Caco-2 (cell line): ENCODE measurements at regions of chr16 and their contacts with region 1.

Region 1: DNA sequence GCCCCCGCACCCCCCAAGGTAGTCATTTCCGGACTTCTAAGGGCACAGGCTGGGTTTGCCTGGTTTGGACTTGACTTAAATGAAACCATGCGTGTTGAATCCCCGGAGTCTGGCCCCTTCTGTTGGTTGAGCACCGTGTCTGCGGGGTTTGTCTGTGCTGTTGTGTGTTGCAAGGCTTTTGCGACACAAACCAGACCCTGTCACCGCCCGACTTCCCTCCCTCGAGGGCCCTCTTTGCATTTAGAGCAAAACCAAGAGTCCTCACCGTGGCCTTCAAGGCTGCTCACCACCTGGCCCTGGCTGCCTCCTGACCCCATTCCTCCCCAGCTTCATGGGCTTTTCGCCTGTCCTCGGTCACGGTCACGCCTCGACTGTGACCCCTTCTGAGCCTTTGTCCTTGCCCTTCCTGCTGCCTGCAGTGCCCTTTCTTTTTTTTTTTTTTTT is 7.4 kb downstream of the CRISPLD2 start:
- DNase-seq: no peak
- H3K4me3 ChIP-seq: no peak overlapping the region
- H3K4me3 Mint-ChIP-seq: no peak overlapping the region
- H3K27ac Mint-ChIP-seq: no peak overlapping the region
- H3K4me1 ChIP-seq: no peaks in the 10 kb centered on the region
- H3K4me1 Mint-ChIP-seq: peaks cover 7% of the 10 kb centered on the region
- H3K27me3 ChIP-seq: no peaks in the 10 kb centered on the region
- H3K27me3 Mint-ChIP-seq: no peaks in the 10 kb centered on the region
- CTCF ChIP-seq: no peak

Region 2: GRCh38 chr16:84662471-84662870 is 164.7 kb before region 1 on chr16:
- CTCF ChIA-PET with region 1: interaction called, 10 read pairs
- POLR2A ChIA-PET with region 1: no interaction called
- intact Hi-C with region 1: no loop called
- DNase-seq: no peak
- H3K4me3 ChIP-seq: no peak overlapping the region
- H3K4me3 Mint-ChIP-seq: no peak overlapping the region
- H3K27ac Mint-ChIP-seq: no peak overlapping the region
- H3K4me1 ChIP-seq: no peaks in the 10 kb centered on the region
- H3K4me1 Mint-ChIP-seq: no peaks in the 10 kb centered on the region
- H3K27me3 ChIP-seq: no peaks in the 10 kb centered on the region
- H3K27me3 Mint-ChIP-seq: no peaks in the 10 kb centered on the region
- CTCF ChIP-seq: no peak